K562 (cell line): ENCODE measurements at regions of chr20 and their contacts with region 1.

Region 1: GRCh38 chr20:1562622-1563021 is 5.1 kb upstream of the SIRPD start:
- DNase-seq: peak in 2 of 4 experiments; percentile 0
- ATAC-seq: no peak
- H3K4me3 ChIP-seq: no peak overlapping the region
- H3K27ac ChIP-seq: no peak overlapping the region
- H3K4me1 ChIP-seq: no peaks in the 10 kb centered on the region
- H3K27me3 ChIP-seq: no peaks in the 10 kb centered on the region
- CTCF ChIP-seq: no peak
- EP300 ChIP-seq: no peak
- POLR2A ChIP-seq: no peak
- RAD21 ChIP-seq: no peak

Region 2: DNA sequence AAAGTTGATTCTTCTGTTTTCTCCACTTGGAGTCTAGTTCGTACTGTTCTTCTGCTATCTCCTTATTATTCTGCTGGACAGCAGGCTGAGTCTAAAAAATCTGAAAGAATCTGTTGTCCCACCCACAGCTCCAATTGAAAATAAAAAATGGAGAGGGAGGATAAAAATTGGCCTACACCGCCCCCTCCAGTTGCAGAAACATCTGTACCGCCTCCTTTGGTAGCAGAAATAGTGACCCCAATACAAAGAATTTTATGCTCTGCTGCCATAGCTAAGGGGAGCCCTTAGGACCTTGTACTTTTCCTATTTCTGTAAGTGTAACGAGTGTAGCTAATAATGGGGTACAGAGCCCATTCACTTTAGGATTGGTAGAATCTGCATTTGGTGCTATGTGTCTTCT is 164.9 kb before region 1 on chr20:
- CTCF ChIA-PET with region 1: no interaction called
- POLR2A ChIA-PET with region 1: no interaction called
- in situ Hi-C with region 1: no loop called
- intact Hi-C with region 1: no loop called
- DNase-seq: peak in 1 of 4 experiments; percentile 24
- ATAC-seq: no peak
- H3K4me3 ChIP-seq: no peak overlapping the region
- H3K27ac ChIP-seq: no peak overlapping the region
- H3K4me1 ChIP-seq: peaks cover 0 to under 1% of the 10 kb centered on the region in 2 experiments; a peak in 2 of 5 replicates
- H3K27me3 ChIP-seq: peaks cover 0 to 6% of the 10 kb centered on the region in 2 experiments; a peak in 4 of 5 replicates
- CTCF ChIP-seq: peak in 2 of 3 experiments; percentile 59 to 61; a peak in 4 of 6 replicates
- EP300 ChIP-seq: no peak
- POLR2A ChIP-seq: no peak
- RAD21 ChIP-seq: peak in 1 of 2 experiments; percentile 40; a peak in 2 of 4 replicates

Region 3: GRCh38 chr20:1619861-1620444 is 57.3 kb after region 1 on chr20 and contains the start of gene SIRPB1:
- CTCF ChIA-PET with region 1: no interaction called
- POLR2A ChIA-PET with region 1: no interaction called
- in situ Hi-C with region 1: loop called (anchors 5 kb)
- intact Hi-C with region 1: no loop called
- DNase-seq: peak in 2 of 4 experiments; percentile 0
- ATAC-seq: no peak
- H3K4me3 ChIP-seq: no peak within 1 kb of the TSS
- H3K27ac ChIP-seq: no peak within 1 kb of the TSS
- H3K4me1 ChIP-seq: no peaks in the 10 kb centered on the region
- H3K27me3 ChIP-seq: peaks cover 0 to 4% of the 10 kb centered on the region in 2 experiments; a peak in 1 of 5 replicates
- CTCF ChIP-seq: no peak
- EP300 ChIP-seq: no peak
- POLR2A ChIP-seq: no peak
- RAD21 ChIP-seq: no peak
- polyA plus RNA-seq, gene SIRPB1: not detected